Activated naive CD4-positive, alpha-beta T cell treated with anti-CD3 and anti-CD28 coated beads for 36 hours (primary cell): ENCODE measurements at regions of chr6 and their contacts with region 1.

Region 1: GRCh38 chr6:10429638-10430427 is 15.0 kb upstream of the TFAP2A start:
- DNase-seq: peak; percentile 54
- H3K4me3 Mint-ChIP-seq: peak overlapping the region; percentile 33
- H3K27ac Mint-ChIP-seq: no peak overlapping the region
- H3K4me1 Mint-ChIP-seq: peaks cover 12% of the 10 kb centered on the region
- H3K27me3 Mint-ChIP-seq: peaks cover 54% of the 10 kb centered on the region

Region 2: GRCh38 chr6:8983188-8983688 is 1446.6 kb before region 1 on chr6:
- CTCF ChIA-PET with region 1: interaction called, 13 read pairs
- intact Hi-C with region 1: loop called (anchors 1 kb)
- DNase-seq: peak; percentile 69
- H3K4me3 Mint-ChIP-seq: no peak overlapping the region
- H3K27ac Mint-ChIP-seq: no peak overlapping the region
- H3K4me1 Mint-ChIP-seq: peaks cover 2% of the 10 kb centered on the region
- H3K27me3 Mint-ChIP-seq: peaks cover 36% of the 10 kb centered on the region

Region 3: DNA sequence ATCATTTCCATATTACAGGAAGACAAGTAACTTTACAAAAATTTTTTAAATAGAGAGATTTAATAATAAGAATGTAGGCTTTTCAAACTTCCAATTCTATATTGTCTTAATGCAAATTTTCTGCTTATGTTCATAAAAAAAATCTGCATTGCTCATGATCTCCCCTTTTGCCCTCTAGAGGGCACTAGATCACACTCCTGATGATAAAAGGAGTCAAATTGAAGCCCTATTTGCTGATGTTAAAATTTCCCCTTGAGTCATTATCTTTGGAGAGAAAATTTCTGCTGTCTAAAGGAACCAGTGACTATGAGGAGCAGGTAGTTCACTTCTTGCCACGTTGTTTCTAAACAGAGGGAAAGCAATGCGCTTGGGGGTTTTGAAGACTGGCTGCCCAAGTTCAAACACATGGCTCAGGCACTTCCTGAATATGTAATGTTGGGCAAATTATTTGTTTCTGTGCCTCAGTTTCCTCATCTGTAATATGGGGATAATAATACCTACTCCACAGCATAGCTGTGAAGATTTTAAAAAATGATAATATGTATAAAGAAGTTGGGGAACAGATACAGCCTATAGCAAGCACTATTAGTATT is 889.2 kb before region 1 on chr6:
- CTCF ChIA-PET with region 1: no interaction called
- intact Hi-C with region 1: loop called (anchors 1 kb)
- DNase-seq: peak; percentile 10
- H3K4me3 Mint-ChIP-seq: no peak overlapping the region
- H3K27ac Mint-ChIP-seq: no peak overlapping the region
- H3K4me1 Mint-ChIP-seq: no peaks in the 10 kb centered on the region
- H3K27me3 Mint-ChIP-seq: no peaks in the 10 kb centered on the region

Region 4: DNA sequence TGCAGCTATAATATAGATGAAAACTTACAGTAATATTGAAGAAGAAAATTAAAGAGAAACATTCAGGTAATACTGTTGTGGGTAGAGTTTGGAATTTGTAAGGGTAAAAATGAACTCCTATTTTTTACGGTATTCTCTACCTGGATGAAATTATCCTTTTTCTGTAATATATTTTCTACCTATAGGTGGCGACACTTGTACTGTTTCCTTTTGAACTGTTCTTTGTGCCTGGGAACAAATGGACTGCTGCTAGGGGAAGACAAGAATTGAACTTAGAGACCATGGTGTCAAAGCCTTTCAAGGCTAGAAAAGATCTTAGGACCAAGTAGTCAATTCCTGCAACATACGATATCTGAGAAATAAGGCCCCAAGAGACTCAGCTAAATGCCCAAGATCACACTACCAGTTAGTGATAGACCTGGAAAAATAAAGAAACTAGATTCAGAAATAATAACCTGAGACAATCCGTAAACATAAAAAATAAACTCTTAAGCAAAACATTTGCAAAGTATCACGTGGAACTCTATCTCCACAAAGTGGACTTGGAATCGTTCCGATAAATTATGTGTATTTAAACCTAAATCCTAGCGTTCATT is 398.8 kb before region 1 on chr6:
- CTCF ChIA-PET with region 1: interaction called, 7 read pairs
- intact Hi-C with region 1: loop called (anchors 1 kb)
- DNase-seq: no peak
- H3K4me3 Mint-ChIP-seq: no peak overlapping the region
- H3K27ac Mint-ChIP-seq: no peak overlapping the region
- H3K4me1 Mint-ChIP-seq: no peaks in the 10 kb centered on the region
- H3K27me3 Mint-ChIP-seq: peaks cover 2% of the 10 kb centered on the region

Region 5: GRCh38 chr6:10146723-10147451 is 282.9 kb before region 1 on chr6:
- CTCF ChIA-PET with region 1: no interaction called
- intact Hi-C with region 1: loop called (anchors 10 kb)
- DNase-seq: peak; percentile 8
- H3K4me3 Mint-ChIP-seq: peak overlapping the region; percentile 48
- H3K27ac Mint-ChIP-seq: no peak overlapping the region
- H3K4me1 Mint-ChIP-seq: peaks cover 4% of the 10 kb centered on the region
- H3K27me3 Mint-ChIP-seq: peaks cover 7% of the 10 kb centered on the region

Region 6: DNA sequence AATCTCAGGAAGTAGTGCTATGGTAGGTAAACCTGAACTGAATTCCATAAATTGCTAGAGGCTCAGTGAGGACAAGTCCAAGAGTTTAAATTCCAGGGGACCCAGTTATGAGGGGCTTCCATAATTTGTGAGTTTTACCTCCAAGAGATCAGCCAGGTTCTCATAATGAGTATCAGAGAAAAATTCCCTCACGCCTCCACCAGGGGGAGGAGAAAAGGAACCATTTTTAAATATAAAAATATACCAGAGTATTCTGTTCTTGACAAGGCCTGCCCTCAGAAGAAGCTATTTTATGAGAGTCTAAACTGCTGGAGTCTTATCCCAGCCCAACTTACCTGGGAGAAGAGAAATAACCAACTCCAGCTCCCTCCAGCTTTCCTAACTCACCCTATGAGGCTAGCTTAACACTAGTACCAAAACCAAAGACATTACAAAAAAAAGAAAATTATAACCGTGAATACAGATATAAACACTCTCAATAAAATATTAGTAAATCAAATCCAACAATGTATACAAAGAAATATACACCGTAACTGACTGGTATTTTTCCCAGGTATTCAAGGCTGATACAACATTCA is 173.6 kb before region 1 on chr6:
- CTCF ChIA-PET with region 1: interaction called, 7 read pairs
- intact Hi-C with region 1: loop called (anchors 1 kb)
- DNase-seq: no peak
- H3K4me3 Mint-ChIP-seq: no peak overlapping the region
- H3K27ac Mint-ChIP-seq: no peak overlapping the region
- H3K4me1 Mint-ChIP-seq: no peaks in the 10 kb centered on the region
- H3K27me3 Mint-ChIP-seq: peaks cover 3% of the 10 kb centered on the region

Region 7: DNA sequence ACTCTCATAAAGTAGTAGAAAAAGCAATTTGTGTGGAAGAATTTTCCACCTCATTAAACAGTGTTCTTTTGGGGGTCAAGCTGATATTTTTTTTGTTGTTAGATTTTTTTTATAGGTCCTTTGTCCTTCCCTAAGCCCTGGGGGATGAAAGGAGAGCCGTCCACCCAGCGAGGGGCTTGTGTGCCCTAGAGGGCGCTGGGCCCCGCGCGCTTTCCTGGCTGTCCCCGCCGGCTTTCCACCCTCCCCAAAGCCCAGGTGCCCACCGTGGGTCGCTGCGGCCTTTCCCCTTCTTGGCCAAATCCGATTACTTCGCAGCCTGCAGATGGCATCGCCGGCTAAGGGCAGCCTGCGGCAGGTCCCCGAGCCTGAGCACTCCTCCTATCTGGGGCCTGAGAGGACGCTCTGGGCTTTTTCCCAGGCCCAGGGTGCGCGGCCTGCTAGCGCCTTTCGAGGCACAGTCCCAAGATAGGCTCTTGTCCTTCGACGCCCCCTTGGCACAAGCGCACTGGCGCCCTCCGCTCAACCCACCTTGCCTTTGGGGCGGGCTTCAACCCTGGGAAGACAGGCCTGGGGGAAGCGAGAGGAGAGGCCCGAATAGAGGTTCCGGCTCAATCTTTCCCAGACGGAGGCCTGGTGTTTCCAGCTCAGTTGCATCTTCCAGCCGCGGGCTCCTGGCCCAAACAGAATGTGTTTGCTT is 48.6 kb before region 1 on chr6:
- CTCF ChIA-PET with region 1: interaction called, 11 read pairs
- intact Hi-C with region 1: loop called (anchors 2 kb)
- DNase-seq: peak; percentile 32
- H3K4me3 Mint-ChIP-seq: no peak overlapping the region
- H3K27ac Mint-ChIP-seq: no peak overlapping the region
- H3K4me1 Mint-ChIP-seq: peaks cover 18% of the 10 kb centered on the region
- H3K27me3 Mint-ChIP-seq: peaks cover 68% of the 10 kb centered on the region